ENCODE measurements at regions of chr4 and their contacts with region 1.

Region 1: DNA sequence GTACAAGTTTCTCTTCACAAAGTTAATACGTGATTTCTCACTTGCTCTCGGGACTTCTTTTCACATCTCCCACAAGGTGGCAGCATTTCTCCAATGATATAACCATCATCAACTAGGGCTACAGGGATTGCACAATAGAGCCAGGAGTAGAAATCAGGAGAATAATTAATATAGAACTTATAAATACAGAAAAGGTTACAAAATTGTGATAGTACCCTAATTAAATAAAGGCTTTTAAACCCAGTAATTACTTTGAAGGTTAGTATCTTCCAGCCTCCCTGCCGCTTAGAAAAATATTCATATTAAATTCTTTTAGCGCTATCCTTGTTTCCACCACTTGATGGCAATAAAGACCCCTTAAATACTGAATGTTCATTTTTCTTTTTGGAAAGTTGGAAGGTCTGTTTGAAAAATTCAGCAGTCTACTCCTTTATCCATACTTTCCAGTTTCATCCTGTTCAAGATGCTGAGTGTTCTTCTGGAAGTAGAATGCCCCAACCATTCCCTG is 65.8 kb downstream of the RASGEF1B start:
- DNase-seq: peak; percentile 72
- H3K4me3 ChIP-seq: no peak overlapping the region
- H3K27ac ChIP-seq: no peak overlapping the region
- H3K4me1 ChIP-seq: no peaks in the 10 kb centered on the region
- H3K27me3 ChIP-seq: no peaks in the 10 kb centered on the region
- CTCF ChIP-seq: peak; percentile 32 to 33
- POLR2A ChIP-seq: no peak

Region 2: GRCh38 chr4:81844717-81845116 is 438.8 kb after region 1 on chr4:
- CTCF ChIA-PET with region 1: interaction called, 3 read pairs
- POLR2A ChIA-PET with region 1: no interaction called
- dilution Hi-C with region 1: no loop called
- intact Hi-C with region 1: loop called (anchors 1 kb)
- DNase-seq: peak; percentile 79
- H3K4me3 ChIP-seq: no peak overlapping the region
- H3K27ac ChIP-seq: no peak overlapping the region
- H3K4me1 ChIP-seq: no peaks in the 10 kb centered on the region
- H3K27me3 ChIP-seq: no peaks in the 10 kb centered on the region
- CTCF ChIP-seq: peak; percentile 55 to 57
- POLR2A ChIP-seq: no peak

Measured in endothelial cell of umbilical vein (primary cell).